Prostate gland (tissue), 2 donors: ENCODE measurements at regions of chr1 and their contacts with region 1.

Region 1: GRCh38 chr1:211654838-211655787 is 20.3 kb downstream of the NEK2 start:
- DNase-seq: peak; percentile 85
- H3K4me3 ChIP-seq: no peak overlapping the region
- H3K27ac ChIP-seq: no peak overlapping the region
- H3K4me1 ChIP-seq: no peaks in the 10 kb centered on the region
- H3K27me3 ChIP-seq: no peaks in the 10 kb centered on the region
- CTCF ChIP-seq: peak; percentile 83 to 94 (median 90)
- POLR2A ChIP-seq: no peak

Region 2: DNA sequence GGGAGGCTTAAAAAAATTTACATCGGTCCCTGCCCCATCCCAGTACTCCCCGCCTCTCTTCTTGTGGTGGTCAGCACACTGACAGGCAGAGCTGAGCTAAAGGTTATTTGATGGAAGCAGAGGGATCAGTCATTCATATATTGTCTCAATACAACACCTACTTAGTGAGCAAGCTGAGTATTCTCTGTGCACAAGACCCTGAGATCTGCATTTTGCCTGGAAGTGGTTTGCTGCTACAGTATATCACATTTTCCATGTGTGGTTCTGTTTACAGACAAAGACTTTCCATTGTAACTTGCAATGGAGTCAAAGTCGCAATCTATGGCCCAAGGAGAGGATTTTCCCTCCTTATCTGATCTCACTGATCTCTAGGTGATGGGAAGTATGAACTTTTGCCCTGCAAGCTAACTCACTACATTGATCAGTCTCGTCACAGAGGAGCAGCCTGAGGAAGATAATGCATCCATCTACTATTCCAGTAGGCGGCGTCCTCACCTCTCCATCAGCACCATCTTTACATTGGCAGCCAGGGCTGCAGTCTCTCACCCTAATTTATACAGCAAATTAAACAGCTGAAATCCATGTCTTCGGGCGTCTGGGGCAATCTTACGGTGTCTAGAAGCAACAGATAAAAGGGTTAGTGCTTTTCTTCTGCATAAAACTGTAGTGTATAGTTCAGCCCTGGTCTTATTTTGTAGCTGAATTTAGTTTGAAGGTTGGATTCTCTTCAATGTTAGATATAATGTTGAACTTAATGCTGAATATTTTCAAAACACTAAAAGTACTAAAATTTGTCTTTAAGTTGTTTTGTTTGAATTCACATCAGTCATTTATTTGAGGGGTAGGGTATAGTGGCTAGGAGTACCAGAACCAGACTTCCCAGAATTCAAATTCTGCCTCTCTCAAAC is 331.7 kb before region 1 on chr1:
- intact Hi-C with region 1: loop called (anchors 10 kb)
- DNase-seq: peak; percentile 54
- H3K4me3 ChIP-seq: no peak overlapping the region
- H3K27ac ChIP-seq: no peak overlapping the region
- H3K4me1 ChIP-seq: no peaks in the 10 kb centered on the region
- H3K27me3 ChIP-seq: no peaks in the 10 kb centered on the region
- CTCF ChIP-seq: peak; percentile 40 to 81 (median 68)
- POLR2A ChIP-seq: no peak

Region 3: DNA sequence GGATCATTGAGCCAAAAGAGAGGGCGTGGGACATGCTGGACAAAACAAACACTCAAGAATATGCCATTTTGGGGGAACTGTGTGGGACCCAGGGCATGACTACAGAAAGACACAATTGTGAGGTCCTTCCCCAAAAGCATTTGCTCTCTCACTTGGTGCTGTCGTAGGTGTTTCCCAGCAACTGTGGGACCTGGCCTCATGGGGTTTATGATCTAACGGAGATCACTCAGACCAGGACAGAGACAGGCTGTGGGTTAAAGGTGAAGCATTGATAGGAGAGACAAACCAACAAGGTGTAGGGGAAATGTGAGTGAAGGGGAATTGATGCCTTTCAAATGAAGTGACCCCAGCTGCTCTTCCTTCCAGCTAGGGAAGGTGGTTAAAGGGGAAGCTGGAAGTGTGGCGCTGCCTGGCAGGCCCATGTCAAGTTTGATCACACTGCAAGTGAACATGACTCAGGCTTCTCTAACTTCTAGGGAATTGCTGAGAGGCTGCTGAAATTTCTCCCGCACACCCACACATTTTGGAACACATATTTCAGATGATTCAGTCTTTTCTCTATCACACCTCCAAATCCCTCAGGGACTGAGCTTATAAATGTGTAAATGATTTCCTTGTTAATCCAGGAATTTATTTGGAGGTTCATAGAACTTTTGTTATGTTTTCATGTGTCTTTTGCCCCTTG is 298.2 kb before region 1 on chr1:
- intact Hi-C with region 1: no loop called
- DNase-seq: no peak
- H3K4me3 ChIP-seq: no peak overlapping the region
- H3K27ac ChIP-seq: no peak overlapping the region
- H3K4me1 ChIP-seq: no peaks in the 10 kb centered on the region
- H3K27me3 ChIP-seq: no peaks in the 10 kb centered on the region
- CTCF ChIP-seq: no peak
- POLR2A ChIP-seq: no peak

Region 4: GRCh38 chr1:211578640-211579433 is 76.3 kb before region 1 on chr1 and contains the start of gene SLC30A1:
- intact Hi-C with region 1: loop called (anchors 1 kb)
- DNase-seq: peak; percentile 99
- H3K4me3 ChIP-seq: peak within 1 kb of the TSS; percentile 91 to 92
- H3K27ac ChIP-seq: peak within 1 kb of the TSS; percentile 91 to 95
- H3K4me1 ChIP-seq: no peaks in the 10 kb centered on the region
- H3K27me3 ChIP-seq: no peaks in the 10 kb centered on the region
- CTCF ChIP-seq: peak in 1 of 4 experiments; percentile 10
- POLR2A ChIP-seq: peak; percentile 95
- total RNA-seq, gene SLC30A1: 12.5 to 22.0 TPM